ENCODE measurements at regions of chr1 and their contacts with region 1.

Region 1: GRCh38 chr1:37817481-37817880 is 9.5 kb upstream of the YRDC start:
- DNase-seq: peak in 1 of 2 donors; percentile 75
- H3K4me3 ChIP-seq: no peak overlapping the region
- H3K27ac ChIP-seq: peak overlapping the region in 1 of 2 donors; percentile 15
- H3K4me1 ChIP-seq: no peaks in the 10 kb centered on the region
- H3K27me3 ChIP-seq: no peaks in the 10 kb centered on the region
- CTCF ChIP-seq: no peak
- POLR2A ChIP-seq: no peak

Region 2: GRCh38 chr1:37688926-37689325 is 128.6 kb before region 1 on chr1:
- intact Hi-C with region 1: loop called (anchors 5 kb)
- DNase-seq: no peak
- H3K4me3 ChIP-seq: peak overlapping the region; percentile 68 to 93 (median 79)
- H3K27ac ChIP-seq: peak overlapping the region in 1 of 2 donors; percentile 87
- H3K4me1 ChIP-seq: peaks cover 9 to 20% of the 10 kb centered on the region in 2 donors
- H3K27me3 ChIP-seq: no peaks in the 10 kb centered on the region
- CTCF ChIP-seq: no peak
- POLR2A ChIP-seq: no peak

Region 3: DNA sequence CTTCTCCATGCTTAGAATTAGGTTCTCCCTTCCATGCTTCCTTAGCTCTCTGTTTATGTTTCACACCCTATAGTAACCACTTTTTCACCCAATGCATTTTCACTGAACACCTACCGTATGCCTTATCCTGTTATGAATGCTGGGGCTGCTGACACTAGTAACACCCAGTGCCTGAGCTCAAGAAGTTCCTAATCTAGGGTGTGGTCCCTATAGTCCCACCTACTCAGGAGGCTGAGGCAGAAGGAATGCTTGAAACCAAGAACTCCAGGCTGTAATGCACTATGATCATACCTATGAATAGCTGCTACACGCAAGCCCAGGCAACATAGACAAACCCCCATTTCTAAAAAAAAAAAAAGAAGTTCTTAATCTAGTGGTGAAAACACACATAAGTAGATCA is 58.0 kb before region 1 on chr1:
- intact Hi-C with region 1: loop called (anchors 2 kb)
- DNase-seq: no peak
- H3K4me3 ChIP-seq: no peak overlapping the region
- H3K27ac ChIP-seq: no peak overlapping the region
- H3K4me1 ChIP-seq: no peaks in the 10 kb centered on the region
- H3K27me3 ChIP-seq: peaks cover 4 to 80% of the 10 kb centered on the region in 2 donors
- CTCF ChIP-seq: no peak
- POLR2A ChIP-seq: no peak

Measured in breast epithelium (tissue), 4 donors.